ENCODE measurements at regions of chr4 and their contacts with region 1.

Region 1: DNA sequence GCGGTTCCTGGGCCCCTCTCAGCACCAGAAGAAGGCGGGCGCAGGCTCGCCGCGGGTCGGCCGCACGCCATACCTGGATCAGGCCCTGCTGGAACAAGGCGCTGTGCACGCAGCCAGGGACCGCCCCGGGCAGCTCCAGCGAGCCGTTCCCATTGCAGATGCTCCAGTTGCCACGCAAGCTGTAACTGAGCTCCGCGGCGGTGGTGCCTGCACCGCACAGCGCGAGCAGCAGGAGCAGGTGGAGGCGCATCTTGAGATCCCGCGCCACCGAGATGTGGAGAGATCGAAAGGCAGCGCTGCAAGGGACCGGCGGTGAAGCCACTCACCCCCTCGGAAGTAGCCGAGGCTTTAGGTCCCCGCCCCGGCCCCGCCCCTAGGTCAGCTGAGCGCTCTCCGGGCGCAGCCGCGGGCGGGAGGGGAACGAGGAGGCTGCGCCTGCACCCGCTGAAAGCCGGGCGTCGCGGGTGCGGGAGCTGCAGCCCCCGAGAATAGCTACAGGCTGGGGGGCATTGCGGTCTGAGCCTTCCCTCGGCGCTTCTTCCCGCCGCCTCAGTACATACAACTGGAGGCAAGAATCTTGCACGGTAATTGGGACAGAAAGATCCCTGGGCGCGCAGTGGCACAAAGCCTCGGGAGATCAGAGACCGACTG is at the start of gene MANBA:
- DNase-seq: peak; percentile 63
- ATAC-seq: peak; percentile 95
- H3K4me3 ChIP-seq: peak within 1 kb of the TSS; percentile 84 to 95 (median 90)
- H3K27ac ChIP-seq: peak within 1 kb of the TSS; percentile 69
- H3K4me1 ChIP-seq: peaks cover 46% of the 10 kb centered on the region
- H3K27me3 ChIP-seq: no peaks in the 10 kb centered on the region; a peak in 1 of 5 replicates
- CTCF ChIP-seq: peak; percentile 27; the same call in 1 of the 2 replicates
- EP300 ChIP-seq: no peak
- POLR2A ChIP-seq: peak; percentile 70 to 85
- RAD21 ChIP-seq: peak; percentile 46; the same call in 1 of the 2 replicates
- total RNA-seq, gene MANBA: 17.1 and 33.3 TPM in 2 replicates

Region 2: DNA sequence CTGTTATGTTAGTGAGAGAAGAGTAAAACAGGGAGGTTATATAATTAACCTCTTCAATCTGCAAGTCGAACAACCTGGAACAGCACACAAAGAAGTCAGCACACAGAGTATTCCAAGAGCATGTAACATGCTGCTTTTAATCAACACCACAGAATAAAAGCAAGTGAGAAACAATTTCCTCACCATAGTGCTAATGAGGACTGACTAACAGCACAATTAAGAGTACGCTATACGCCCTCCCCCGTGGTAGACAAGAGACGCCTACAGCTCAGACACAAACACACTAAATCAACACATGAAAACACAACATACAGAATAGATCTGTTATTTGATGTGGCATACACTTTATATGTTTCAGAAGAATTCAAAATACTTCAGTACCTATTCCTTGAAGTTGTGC is 1516.4 kb before region 1 on chr4:
- CTCF ChIA-PET with region 1: no interaction called
- POLR2A ChIA-PET with region 1: no interaction called
- in situ Hi-C with region 1: no loop called
- intact Hi-C with region 1: no loop called
- DNase-seq: no peak
- ATAC-seq: no peak
- H3K4me3 ChIP-seq: no peak overlapping the region
- H3K27ac ChIP-seq: no peak overlapping the region
- H3K4me1 ChIP-seq: no peaks in the 10 kb centered on the region
- H3K27me3 ChIP-seq: no peaks in the 10 kb centered on the region
- CTCF ChIP-seq: no peak
- EP300 ChIP-seq: no peak
- POLR2A ChIP-seq: no peak
- RAD21 ChIP-seq: no peak

Region 3: GRCh38 chr4:102500696-102501446 is 259.9 kb before region 1 on chr4 and contains the start of gene NFKB1:
- CTCF ChIA-PET with region 1: no interaction called
- POLR2A ChIA-PET with region 1: no interaction called
- in situ Hi-C with region 1: no loop called
- intact Hi-C with region 1: no loop called
- DNase-seq: peak; percentile 54
- ATAC-seq: peak; percentile 61
- H3K4me3 ChIP-seq: peak within 1 kb of the TSS; percentile 85 to 94 (median 92)
- H3K27ac ChIP-seq: peak within 1 kb of the TSS; percentile 97
- H3K4me1 ChIP-seq: peaks cover 43% of the 10 kb centered on the region
- H3K27me3 ChIP-seq: no peaks in the 10 kb centered on the region
- CTCF ChIP-seq: no peak
- EP300 ChIP-seq: no peak
- POLR2A ChIP-seq: peak in 1 of 2 experiments; percentile 11; a peak in 2 of 4 replicates
- RAD21 ChIP-seq: no peak
- total RNA-seq, gene NFKB1: 31.6 and 37.6 TPM in 2 replicates

Region 4: GRCh38 chr4:102717448-102718092 is 43.2 kb before region 1 on chr4:
- CTCF ChIA-PET with region 1: no interaction called
- POLR2A ChIA-PET with region 1: no interaction called
- in situ Hi-C with region 1: no loop called
- intact Hi-C with region 1: loop called (anchors 5 kb)
- DNase-seq: peak; percentile 73
- ATAC-seq: peak; percentile 85
- H3K4me3 ChIP-seq: no peak overlapping the region
- H3K27ac ChIP-seq: peak overlapping the region; percentile 23
- H3K4me1 ChIP-seq: peaks cover 57% of the 10 kb centered on the region
- H3K27me3 ChIP-seq: no peaks in the 10 kb centered on the region
- CTCF ChIP-seq: no peak
- EP300 ChIP-seq: no peak
- POLR2A ChIP-seq: no peak
- RAD21 ChIP-seq: no peak

Measured in HepG2 (cell line).